Activated naive CD4-positive, alpha-beta T cell treated with anti-CD3 and anti-CD28 coated beads for 36 hours (primary cell): ENCODE measurements at regions of chr1 and their contacts with region 1.

Region 1: DNA sequence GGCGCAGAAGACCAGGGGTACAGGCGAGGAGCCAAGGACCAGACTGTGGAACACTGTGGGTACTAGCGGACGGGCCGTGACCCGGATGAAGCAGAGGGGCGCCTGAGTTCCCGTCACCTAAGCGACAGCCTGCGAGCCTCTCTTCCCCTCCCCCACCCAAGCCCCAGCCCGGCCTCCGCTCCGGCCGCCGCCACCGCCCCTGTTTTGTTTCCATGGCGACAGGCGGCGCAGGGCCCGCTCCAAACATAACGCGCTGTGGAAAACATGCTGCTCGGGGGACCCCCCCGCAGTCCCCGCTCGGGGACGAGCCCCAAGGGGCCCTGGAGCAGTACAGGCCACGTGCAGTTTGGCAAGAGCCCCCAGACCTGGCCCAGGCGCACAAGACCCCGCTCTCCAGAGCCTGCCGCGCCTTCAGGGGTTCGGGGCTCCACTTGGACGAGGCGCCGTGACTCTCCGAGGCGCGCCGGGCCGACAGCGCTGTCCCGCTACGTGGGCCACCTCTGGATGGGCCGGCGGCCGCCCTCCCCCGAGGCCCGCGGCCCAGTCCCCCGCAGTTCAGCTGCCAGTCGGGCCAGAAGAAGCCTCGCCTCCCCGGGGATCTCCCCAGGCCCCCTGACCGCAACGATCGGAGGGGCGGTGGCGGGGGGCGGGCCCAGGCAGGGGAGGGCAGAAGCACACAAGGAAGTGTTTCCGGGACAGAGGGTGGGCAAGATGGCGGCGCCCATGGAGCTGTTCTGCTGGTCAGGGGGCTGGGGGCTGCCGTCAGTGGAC is at the start of gene MTX1:
- DNase-seq: peak; percentile 89
- H3K4me3 Mint-ChIP-seq: peak within 1 kb of the TSS; percentile 88
- H3K27ac Mint-ChIP-seq: peak within 1 kb of the TSS; percentile 71
- H3K4me1 Mint-ChIP-seq: peaks cover 29% of the 10 kb centered on the region
- H3K27me3 Mint-ChIP-seq: no peaks in the 10 kb centered on the region
- total RNA-seq, gene MTX1: 46.8 to 47.4 TPM

Region 2: GRCh38 chr1:155193275-155193990 is 15.3 kb before region 1 on chr1:
- CTCF ChIA-PET with region 1: interaction called, 35 read pairs
- intact Hi-C with region 1: loop called (anchors 1 kb)
- DNase-seq: peak; percentile 86
- H3K4me3 Mint-ChIP-seq: peak overlapping the region; percentile 93
- H3K27ac Mint-ChIP-seq: peak overlapping the region; percentile 96
- H3K4me1 Mint-ChIP-seq: peaks cover 27% of the 10 kb centered on the region
- H3K27me3 Mint-ChIP-seq: no peaks in the 10 kb centered on the region

Region 3: DNA sequence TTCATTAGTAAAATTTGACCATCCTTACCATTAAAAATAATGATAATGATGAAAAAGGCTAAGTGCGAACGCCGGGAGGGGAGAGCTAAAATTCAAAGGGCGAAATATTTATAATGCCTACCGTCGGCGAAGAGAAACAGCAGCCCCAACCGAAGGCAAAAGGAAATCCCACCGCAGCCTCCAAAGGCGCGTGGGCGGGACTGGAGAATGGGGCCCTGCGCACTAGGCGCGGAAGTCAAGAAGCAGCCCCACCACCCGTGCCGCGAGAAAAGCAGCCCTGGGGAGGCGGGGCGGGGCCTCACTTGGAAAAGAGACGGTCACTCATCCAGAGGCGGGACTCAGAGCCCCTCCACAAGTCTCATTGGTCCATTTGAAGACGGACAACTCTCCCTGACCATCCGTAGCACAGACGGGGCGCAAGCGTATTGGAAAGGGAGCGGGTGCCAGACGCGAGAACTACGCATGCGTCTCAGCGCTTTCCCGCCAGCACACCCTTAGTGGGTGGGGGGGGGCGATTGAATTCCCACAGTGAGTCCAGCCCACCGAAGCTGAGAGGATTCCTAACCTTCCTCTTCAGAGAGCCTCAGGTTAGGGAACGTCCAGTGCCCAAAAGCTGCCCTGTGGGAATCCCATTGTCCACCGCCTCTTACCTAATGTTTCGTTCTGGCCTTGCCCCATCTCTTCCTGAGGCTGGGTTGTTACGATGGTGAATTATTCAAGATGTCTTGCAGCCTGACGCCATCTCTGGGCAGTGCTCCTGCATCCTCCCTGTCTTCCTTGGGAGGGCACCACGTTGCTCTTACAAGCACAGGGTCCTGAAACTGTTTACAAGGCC is 18.8 kb after region 1 on chr1:
- CTCF ChIA-PET with region 1: interaction called, 57 read pairs
- intact Hi-C with region 1: loop called (anchors 1 kb)
- DNase-seq: peak; percentile 100
- H3K4me3 Mint-ChIP-seq: peak overlapping the region; percentile 89
- H3K27ac Mint-ChIP-seq: peak overlapping the region; percentile 96
- H3K4me1 Mint-ChIP-seq: peaks cover 31% of the 10 kb centered on the region
- H3K27me3 Mint-ChIP-seq: no peaks in the 10 kb centered on the region

Region 4: GRCh38 chr1:155277070-155277895 is 68.6 kb after region 1 on chr1 and contains the start of gene HCN3:
- CTCF ChIA-PET with region 1: interaction called, 4 read pairs
- intact Hi-C with region 1: loop called (anchors 5 kb)
- DNase-seq: peak; percentile 96
- H3K4me3 Mint-ChIP-seq: peak within 1 kb of the TSS; percentile 62
- H3K27ac Mint-ChIP-seq: no peak within 1 kb of the TSS
- H3K4me1 Mint-ChIP-seq: peaks cover 30% of the 10 kb centered on the region
- H3K27me3 Mint-ChIP-seq: no peaks in the 10 kb centered on the region
- total RNA-seq, gene HCN3: 0.79 to 1.6 TPM

Region 5: GRCh38 chr1:155504207-155504606 is 295.5 kb after region 1 on chr1:
- CTCF ChIA-PET with region 1: no interaction called
- intact Hi-C with region 1: no loop called
- DNase-seq: no peak
- H3K4me3 Mint-ChIP-seq: no peak overlapping the region
- H3K27ac Mint-ChIP-seq: no peak overlapping the region
- H3K4me1 Mint-ChIP-seq: peaks cover 42% of the 10 kb centered on the region
- H3K27me3 Mint-ChIP-seq: no peaks in the 10 kb centered on the region

Region 6: GRCh38 chr1:155591770-155592169 is 383.0 kb after region 1 on chr1:
- CTCF ChIA-PET with region 1: interaction called, 6 read pairs
- intact Hi-C with region 1: loop called (anchors 2 kb)
- DNase-seq: peak; percentile 44
- H3K4me3 Mint-ChIP-seq: no peak overlapping the region
- H3K27ac Mint-ChIP-seq: no peak overlapping the region
- H3K4me1 Mint-ChIP-seq: no peaks in the 10 kb centered on the region
- H3K27me3 Mint-ChIP-seq: no peaks in the 10 kb centered on the region